AG04449 (cell line): ENCODE measurements at regions of chr3 and their contacts with region 1.

Region 1: GRCh38 chr3:187679638-187680396 is 9.6 kb upstream of the SST start:
- DNase-seq: no peak
- H3K4me3 ChIP-seq: no peak overlapping the region
- CTCF ChIP-seq: peak; percentile 93

Region 2: GRCh38 chr3:187164885-187165543 is 514.8 kb before region 1 on chr3:
- CTCF ChIA-PET with region 1: interaction called, 15 read pairs
- POLR2A ChIA-PET with region 1: no interaction called
- DNase-seq: no peak
- H3K4me3 ChIP-seq: no peak overlapping the region
- CTCF ChIP-seq: peak; percentile 49

Region 3: GRCh38 chr3:187291001-187291511 is 388.8 kb before region 1 on chr3:
- CTCF ChIA-PET with region 1: interaction called, 30 read pairs
- POLR2A ChIA-PET with region 1: no interaction called
- DNase-seq: no peak
- H3K4me3 ChIP-seq: peak overlapping the region; percentile 62
- CTCF ChIP-seq: no peak

Region 4: GRCh38 chr3:187314176-187314575 is 365.6 kb before region 1 on chr3:
- CTCF ChIA-PET with region 1: interaction called, 1,530 read pairs
- POLR2A ChIA-PET with region 1: interaction called, 6 read pairs
- DNase-seq: no peak
- H3K4me3 ChIP-seq: no peak overlapping the region
- CTCF ChIP-seq: no peak

Region 5: GRCh38 chr3:187616307-187616972 is 63.4 kb before region 1 on chr3:
- CTCF ChIA-PET with region 1: interaction called, 47 read pairs
- POLR2A ChIA-PET with region 1: no interaction called
- DNase-seq: no peak
- H3K4me3 ChIP-seq: no peak overlapping the region
- CTCF ChIP-seq: peak; percentile 66

Region 6: DNA sequence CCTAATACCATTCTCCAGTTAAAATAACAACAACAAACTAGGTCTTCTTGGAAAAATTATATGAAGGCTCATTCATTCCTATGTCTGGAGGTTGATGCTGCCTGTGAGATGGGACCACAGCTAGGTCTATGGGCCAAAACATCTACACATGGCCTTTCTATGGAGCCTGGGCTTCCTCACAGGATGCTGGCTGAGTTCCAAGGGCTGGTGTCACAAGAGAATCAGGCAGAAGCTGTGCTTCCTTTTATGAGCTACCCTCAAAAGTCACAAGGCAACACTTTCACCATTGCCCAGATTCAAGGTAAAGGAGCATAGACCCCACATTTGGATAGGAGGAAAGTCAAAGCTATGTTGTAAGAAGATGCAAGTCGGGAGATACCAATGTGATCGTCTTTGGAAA is 27.2 kb after region 1 on chr3:
- CTCF ChIA-PET with region 1: interaction called, 98 read pairs
- POLR2A ChIA-PET with region 1: no interaction called
- DNase-seq: no peak
- H3K4me3 ChIP-seq: no peak overlapping the region
- CTCF ChIP-seq: no peak

Region 7: DNA sequence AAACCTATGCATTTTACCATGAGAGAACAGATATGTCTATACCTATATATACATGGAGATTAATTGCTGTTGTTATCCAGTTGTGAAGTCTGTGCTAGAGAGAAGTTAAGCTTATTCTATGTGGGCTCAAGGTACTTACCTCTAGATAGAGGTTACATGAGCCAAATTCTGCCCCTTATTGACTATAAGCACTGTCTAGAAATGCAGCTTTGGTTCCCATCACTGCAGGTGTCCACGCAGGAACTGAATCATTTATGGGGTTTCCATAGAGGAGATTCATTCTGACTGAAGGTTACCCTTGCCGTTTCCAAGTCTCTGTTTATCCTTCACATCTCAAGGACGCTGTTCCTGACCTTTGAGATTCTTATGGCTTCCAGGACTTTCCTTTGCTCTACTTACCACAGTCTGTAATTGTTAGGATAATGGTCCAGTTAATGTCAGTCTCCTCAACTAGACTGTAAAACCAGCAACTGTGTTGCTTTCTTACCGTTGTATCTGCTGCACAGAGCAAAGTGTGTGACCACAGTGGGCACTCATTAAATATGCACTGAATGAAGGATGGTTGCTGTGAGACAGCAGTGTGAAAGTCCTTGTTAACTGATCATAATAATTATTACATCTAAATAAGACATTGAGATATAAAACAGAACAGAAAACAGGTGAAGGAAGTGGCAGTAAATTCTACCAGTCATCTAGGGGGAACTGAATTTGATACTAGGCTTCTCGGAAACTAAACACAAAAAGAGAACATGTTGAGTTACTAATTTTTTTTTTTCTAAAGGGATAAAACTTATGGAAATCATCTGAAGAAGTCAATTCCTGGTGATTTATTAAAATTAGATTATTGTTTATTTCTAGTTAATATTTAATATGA is 109.4 kb after region 1 on chr3:
- CTCF ChIA-PET with region 1: no interaction called
- POLR2A ChIA-PET with region 1: no interaction called
- DNase-seq: no peak
- H3K4me3 ChIP-seq: no peak overlapping the region
- CTCF ChIP-seq: no peak

Region 8: GRCh38 chr3:187852842-187853727 is 173.3 kb after region 1 on chr3:
- CTCF ChIA-PET with region 1: no interaction called
- POLR2A ChIA-PET with region 1: no interaction called
- DNase-seq: no peak
- H3K4me3 ChIP-seq: no peak overlapping the region
- CTCF ChIP-seq: no peak